HepG2 (cell line): ENCODE measurements at regions of chr2 and their contacts with region 1.

Region 1: GRCh38 chr2:173749315-173749714 is 215.9 kb downstream of the SP3 start:
- DNase-seq: peak; percentile 23
- ATAC-seq: peak; percentile 50; the same call in 2 of the 3 replicates
- H3K4me3 ChIP-seq: no peak overlapping the region
- H3K27ac ChIP-seq: no peak overlapping the region
- H3K4me1 ChIP-seq: peaks cover 8% of the 10 kb centered on the region; the same call in 1 of the 2 replicates
- H3K27me3 ChIP-seq: peaks cover 0 to 18% of the 10 kb centered on the region in 2 experiments; a peak in 2 of 5 replicates
- CTCF ChIP-seq: 0 out of 2 replicates have a peak, but pooled peaks have one; percentile 36
- EP300 ChIP-seq: no peak
- POLR2A ChIP-seq: no peak
- RAD21 ChIP-seq: 0 out of 2 replicates have a peak, but pooled peaks have one; percentile 29

Region 2: GRCh38 chr2:173571021-173571882 is 178.1 kb before region 1 on chr2:
- CTCF ChIA-PET with region 1: interaction called, 4 read pairs
- POLR2A ChIA-PET with region 1: no interaction called
- in situ Hi-C with region 1: no loop called
- intact Hi-C with region 1: loop called (anchors 1 kb)
- DNase-seq: peak; percentile 26
- ATAC-seq: peak; percentile 65
- H3K4me3 ChIP-seq: no peak overlapping the region
- H3K27ac ChIP-seq: no peak overlapping the region
- H3K4me1 ChIP-seq: no peaks in the 10 kb centered on the region
- H3K27me3 ChIP-seq: peaks cover 0 to 14% of the 10 kb centered on the region in 2 experiments; a peak in 2 of 5 replicates
- CTCF ChIP-seq: peak; percentile 47
- EP300 ChIP-seq: no peak
- POLR2A ChIP-seq: no peak
- RAD21 ChIP-seq: no peak